GM12878 (cell line): ENCODE measurements at regions of chr12 and their contacts with region 1.

Region 1: DNA sequence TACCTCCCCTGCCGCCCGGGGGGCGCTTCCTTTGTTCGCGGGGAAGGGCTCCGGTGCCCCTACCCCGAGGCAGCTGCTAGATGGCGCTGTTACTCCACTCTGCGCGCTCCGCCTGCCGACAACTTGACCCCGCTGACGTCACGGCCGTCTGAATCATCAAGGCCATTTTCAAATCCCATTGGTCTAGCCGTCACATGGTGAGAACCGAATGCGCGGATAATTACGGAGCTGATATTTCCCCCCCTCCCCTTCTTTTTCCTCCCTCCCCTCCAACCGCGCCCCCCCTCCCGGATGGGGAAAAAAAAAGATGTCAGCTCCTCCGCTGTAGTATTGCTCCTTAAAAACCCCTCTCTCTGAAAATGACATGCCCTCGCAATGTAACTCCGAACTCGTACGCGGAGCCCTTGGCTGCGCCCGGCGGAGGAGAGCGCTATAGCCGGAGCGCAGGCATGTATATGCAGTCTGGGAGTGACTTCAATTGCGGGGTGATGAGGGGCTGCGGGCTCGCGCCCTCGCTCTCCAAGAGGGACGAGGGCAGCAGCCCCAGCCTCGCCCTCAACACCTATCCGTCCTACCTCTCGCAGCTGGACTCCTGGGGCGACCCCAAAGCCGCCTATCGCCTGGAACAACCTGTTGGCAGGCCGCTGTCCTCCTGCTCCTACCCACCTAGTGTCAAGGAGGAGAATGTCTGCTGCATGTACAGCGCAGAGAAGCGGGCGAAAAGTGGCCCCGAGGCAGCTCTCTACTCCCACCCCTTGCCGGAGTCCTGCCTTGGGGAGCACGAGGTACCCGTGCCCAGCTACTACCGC is at the start of gene HOXC10:
- DNase-seq: peak; percentile 38
- ATAC-seq: peak; percentile 80
- H3K4me3 ChIP-seq: peak within 1 kb of the TSS; percentile 44; the same call in 1 of the 2 replicates
- H3K27ac ChIP-seq: no peak within 1 kb of the TSS
- H3K4me1 ChIP-seq: peaks cover 24% of the 10 kb centered on the region
- H3K27me3 ChIP-seq: peaks cover 30 to 50% of the 10 kb centered on the region in 2 experiments
- CTCF ChIP-seq: peak; percentile 67 to 93 (median 86)
- EP300 ChIP-seq: no peak
- POLR2A ChIP-seq: no peak
- RAD21 ChIP-seq: peak; percentile 77
- polyA plus RNA-seq, gene HOXC10: not detected

Region 2: DNA sequence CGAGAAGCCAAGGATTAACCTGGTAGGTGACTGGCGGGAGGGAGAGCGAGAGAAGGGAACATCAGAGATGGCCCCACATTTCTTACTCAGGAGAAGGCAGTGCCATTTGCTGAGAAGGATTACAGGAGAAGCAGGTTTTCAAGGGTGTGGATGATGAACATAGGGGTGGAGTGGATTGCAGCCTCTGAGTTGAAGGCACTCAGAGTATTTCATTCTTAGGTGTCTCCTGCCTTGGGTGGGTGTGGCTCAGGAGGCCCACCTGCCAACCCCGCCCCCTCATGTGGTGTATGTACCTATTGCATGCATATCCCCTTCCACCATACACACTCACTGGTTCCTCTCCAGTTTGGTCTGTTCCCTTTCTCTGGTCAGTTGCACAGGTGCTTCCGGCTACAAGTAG is 710.7 kb before region 1 on chr12:
- CTCF ChIA-PET with region 1: no interaction called
- POLR2A ChIA-PET with region 1: no interaction called
- RAD21 ChIA-PET with region 1: no interaction called
- SMC1A ChIA-PET with region 1: no interaction called
- in situ Hi-C with region 1: no loop called
- intact Hi-C with region 1: no loop called
- DNase-seq: no peak
- ATAC-seq: no peak
- H3K4me3 ChIP-seq: no peak overlapping the region
- H3K27ac ChIP-seq: no peak overlapping the region
- H3K4me1 ChIP-seq: peaks cover 7% of the 10 kb centered on the region
- H3K27me3 ChIP-seq: no peaks in the 10 kb centered on the region
- CTCF ChIP-seq: no peak
- EP300 ChIP-seq: no peak
- POLR2A ChIP-seq: no peak
- RAD21 ChIP-seq: no peak

Region 3: GRCh38 chr12:53701518-53702260 is 283.4 kb before region 1 on chr12:
- CTCF ChIA-PET with region 1: interaction called, 4 read pairs
- POLR2A ChIA-PET with region 1: no interaction called
- RAD21 ChIA-PET with region 1: no interaction called
- SMC1A ChIA-PET with region 1: no interaction called
- in situ Hi-C with region 1: no loop called
- intact Hi-C with region 1: loop called (anchors 10 kb)
- DNase-seq: peak; percentile 20
- ATAC-seq: peak; percentile 99
- H3K4me3 ChIP-seq: no peak overlapping the region
- H3K27ac ChIP-seq: no peak overlapping the region
- H3K4me1 ChIP-seq: no peaks in the 10 kb centered on the region
- H3K27me3 ChIP-seq: peaks cover 8 to 29% of the 10 kb centered on the region in 2 experiments
- CTCF ChIP-seq: peak; percentile 96 to 99 (median 98); a peak in 5 of 6 replicates
- EP300 ChIP-seq: no peak
- POLR2A ChIP-seq: no peak
- RAD21 ChIP-seq: peak; percentile 92

Region 4: DNA sequence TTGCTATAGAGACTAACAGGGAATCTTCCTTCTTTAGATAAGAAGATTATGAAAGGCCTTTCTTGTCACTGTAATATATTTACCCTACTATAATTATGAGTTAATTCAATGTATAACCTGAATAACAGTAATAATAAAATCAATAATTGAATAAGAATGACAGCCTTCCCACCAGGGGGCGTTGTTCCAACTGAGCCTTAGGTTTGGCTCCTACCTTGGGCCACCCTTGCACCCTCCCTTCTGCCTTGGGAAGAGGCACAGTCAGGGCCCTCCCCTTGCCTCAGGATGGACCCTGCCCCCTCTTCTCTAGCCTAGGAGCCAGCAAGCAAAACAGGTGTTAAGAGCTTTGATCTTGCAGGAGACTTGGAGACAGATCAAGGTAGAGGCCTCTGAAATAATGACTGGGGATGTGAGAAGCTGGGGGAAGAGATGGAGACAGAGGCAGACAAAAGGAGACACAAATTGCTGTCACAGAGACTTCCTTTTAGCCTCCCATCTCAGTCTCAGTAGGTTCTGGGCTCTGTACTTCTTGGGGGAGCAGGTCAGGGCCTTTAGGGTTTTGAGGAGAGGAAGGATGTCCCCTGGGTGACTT is 193.3 kb before region 1 on chr12:
- CTCF ChIA-PET with region 1: interaction called, 4 read pairs
- POLR2A ChIA-PET with region 1: no interaction called
- RAD21 ChIA-PET with region 1: no interaction called
- SMC1A ChIA-PET with region 1: interaction called, 3 read pairs
- in situ Hi-C with region 1: no loop called
- intact Hi-C with region 1: loop called (anchors 10 kb)
- DNase-seq: no peak
- ATAC-seq: peak; percentile 34; the same call in 1 of the 3 replicates
- H3K4me3 ChIP-seq: no peak overlapping the region
- H3K27ac ChIP-seq: no peak overlapping the region
- H3K4me1 ChIP-seq: no peaks in the 10 kb centered on the region
- H3K27me3 ChIP-seq: no peaks in the 10 kb centered on the region
- CTCF ChIP-seq: peak; percentile 31 to 54 (median 52); a peak in 5 of 6 replicates
- EP300 ChIP-seq: no peak
- POLR2A ChIP-seq: no peak
- RAD21 ChIP-seq: peak; percentile 37; the same call in 1 of the 2 replicates

Region 5: DNA sequence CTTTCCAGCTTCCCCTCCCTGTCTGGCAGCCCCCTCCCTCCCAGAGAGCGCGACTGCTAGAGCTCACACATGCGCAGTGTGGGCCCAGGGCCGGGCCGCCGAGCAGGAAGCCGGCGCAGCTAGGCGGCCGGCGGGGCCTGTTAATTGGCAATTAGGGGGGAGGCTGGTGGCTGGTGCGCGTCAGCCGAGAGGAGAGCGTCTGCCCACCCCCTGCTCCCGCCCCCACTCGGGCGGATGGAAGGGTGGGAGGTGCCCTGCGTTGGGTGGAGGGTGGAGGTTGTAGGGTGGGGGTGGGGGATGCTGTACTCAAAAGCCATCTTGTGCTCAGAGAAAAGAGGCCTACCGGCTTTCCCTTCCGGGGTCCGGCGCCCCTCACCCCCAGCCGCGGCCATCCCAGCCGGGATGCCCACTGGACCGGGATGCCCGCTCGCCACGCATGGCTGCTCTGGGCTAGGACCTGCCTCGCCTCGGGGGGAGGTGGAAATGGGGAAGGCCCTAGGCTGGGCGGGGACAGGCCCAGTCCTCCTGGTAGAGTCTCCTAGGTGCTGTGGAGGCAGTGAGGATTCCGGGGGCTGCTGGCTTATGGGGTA is 32.9 kb after region 1 on chr12:
- CTCF ChIA-PET with region 1: interaction called, 25 read pairs
- POLR2A ChIA-PET with region 1: interaction called, 5 read pairs
- RAD21 ChIA-PET with region 1: interaction called, 9 read pairs
- SMC1A ChIA-PET with region 1: interaction called, 3 read pairs
- in situ Hi-C with region 1: no loop called
- intact Hi-C with region 1: no loop called
- DNase-seq: peak; percentile 79
- ATAC-seq: peak; percentile 92
- H3K4me3 ChIP-seq: peak overlapping the region; percentile 88
- H3K27ac ChIP-seq: peak overlapping the region; percentile 80
- H3K4me1 ChIP-seq: peaks cover 21% of the 10 kb centered on the region
- H3K27me3 ChIP-seq: peaks cover 8 to 26% of the 10 kb centered on the region in 2 experiments
- CTCF ChIP-seq: no peak
- EP300 ChIP-seq: peak; percentile 36 to 45; a peak in 1 of 4 replicates
- POLR2A ChIP-seq: peak; percentile 79
- RAD21 ChIP-seq: no peak

Region 6: GRCh38 chr12:54201001-54201794 is 216.1 kb after region 1 on chr12:
- CTCF ChIA-PET with region 1: interaction called, 54 read pairs
- POLR2A ChIA-PET with region 1: no interaction called
- RAD21 ChIA-PET with region 1: interaction called, 11 read pairs
- SMC1A ChIA-PET with region 1: interaction called, 29 read pairs
- in situ Hi-C with region 1: no loop called
- intact Hi-C with region 1: loop called (anchors 2 kb)
- DNase-seq: no peak
- ATAC-seq: peak; percentile 97
- H3K4me3 ChIP-seq: no peak overlapping the region
- H3K27ac ChIP-seq: no peak overlapping the region
- H3K4me1 ChIP-seq: peaks cover 15% of the 10 kb centered on the region
- H3K27me3 ChIP-seq: peaks cover 0 to 2% of the 10 kb centered on the region in 2 experiments; a peak in 3 of 4 replicates
- CTCF ChIP-seq: peak; percentile 93 to 98 (median 96)
- EP300 ChIP-seq: no peak
- POLR2A ChIP-seq: no peak
- RAD21 ChIP-seq: peak; percentile 68